ENCODE measurements at regions of chr7 and their contacts with region 1.

Region 1: DNA sequence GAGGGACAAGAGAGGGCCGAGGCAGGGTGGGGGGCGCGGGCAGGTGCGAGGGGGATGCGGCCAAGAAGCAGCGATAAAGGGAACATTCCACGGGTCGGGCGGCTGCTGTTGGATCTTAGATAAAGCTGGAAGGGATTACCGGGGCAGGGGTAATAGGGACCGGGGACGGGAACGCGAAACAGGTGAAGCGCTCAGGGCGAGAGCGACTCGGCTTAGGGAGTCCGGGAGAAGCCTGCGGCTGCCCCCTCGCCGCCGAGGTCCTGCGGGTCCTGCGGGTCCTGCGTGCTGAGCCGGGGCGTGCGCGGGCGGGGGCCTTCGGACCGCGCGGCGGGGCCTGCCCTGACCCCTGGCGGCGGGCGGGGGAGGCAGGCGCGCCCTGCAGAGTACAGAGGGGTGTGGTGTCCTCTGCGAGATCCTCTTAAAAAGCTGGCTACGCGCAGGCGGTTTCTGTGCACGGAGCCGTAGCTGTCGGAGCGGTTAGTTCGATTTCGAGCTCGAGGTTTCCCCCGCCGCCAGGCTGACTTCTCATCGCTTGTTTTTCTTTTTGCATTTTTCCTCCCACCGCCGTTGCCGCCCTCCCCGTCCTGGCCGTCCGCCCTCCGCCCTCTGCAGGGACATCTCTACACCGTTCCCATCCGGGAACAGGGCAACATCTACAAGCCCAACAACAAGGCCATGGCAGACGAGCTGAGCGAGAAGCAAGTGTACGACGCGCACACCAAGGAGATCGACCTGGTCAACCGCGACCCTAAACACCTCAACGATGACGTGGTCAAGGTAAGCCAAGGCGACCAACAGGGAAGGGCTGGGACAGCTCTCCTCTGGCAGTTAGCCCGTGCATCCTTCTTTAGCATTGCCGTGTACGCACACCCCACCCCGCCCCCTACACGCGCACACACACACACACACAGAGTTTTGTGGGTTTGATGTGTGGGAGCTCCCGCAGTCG is 1.4 kb downstream of the CAV1 start:
- DNase-seq: peak; percentile 84
- H3K4me3 ChIP-seq: peak overlapping the region; percentile 74 to 98 (median 90)
- H3K27ac ChIP-seq: peak overlapping the region; percentile 97
- H3K4me1 ChIP-seq: peaks cover 72% of the 10 kb centered on the region
- H3K27me3 ChIP-seq: no peaks in the 10 kb centered on the region
- CTCF ChIP-seq: peak; percentile 72 to 88
- POLR2A ChIP-seq: peak; percentile 81

Region 2: GRCh38 chr7:116180302-116180701 is 345.9 kb before region 1 on chr7:
- CTCF ChIA-PET with region 1: interaction called, 9 read pairs
- POLR2A ChIA-PET with region 1: no interaction called
- dilution Hi-C with region 1: no loop called
- intact Hi-C with region 1: loop called (anchors 1 kb)
- DNase-seq: peak; percentile 70
- H3K4me3 ChIP-seq: no peak overlapping the region
- H3K27ac ChIP-seq: no peak overlapping the region
- H3K4me1 ChIP-seq: no peaks in the 10 kb centered on the region
- H3K27me3 ChIP-seq: no peaks in the 10 kb centered on the region
- CTCF ChIP-seq: peak; percentile 53 to 63
- POLR2A ChIP-seq: no peak

Region 3: GRCh38 chr7:116271963-116272839 is 254.0 kb before region 1 on chr7:
- CTCF ChIA-PET with region 1: interaction called, 14 read pairs
- POLR2A ChIA-PET with region 1: no interaction called
- dilution Hi-C with region 1: loop called (anchors 25 kb)
- intact Hi-C with region 1: no loop called
- DNase-seq: peak; percentile 94
- H3K4me3 ChIP-seq: peak overlapping the region in 1 of 3 experiments; percentile 48
- H3K27ac ChIP-seq: peak overlapping the region; percentile 90
- H3K4me1 ChIP-seq: peaks cover 57% of the 10 kb centered on the region
- H3K27me3 ChIP-seq: no peaks in the 10 kb centered on the region
- CTCF ChIP-seq: no peak
- POLR2A ChIP-seq: no peak

Region 4: DNA sequence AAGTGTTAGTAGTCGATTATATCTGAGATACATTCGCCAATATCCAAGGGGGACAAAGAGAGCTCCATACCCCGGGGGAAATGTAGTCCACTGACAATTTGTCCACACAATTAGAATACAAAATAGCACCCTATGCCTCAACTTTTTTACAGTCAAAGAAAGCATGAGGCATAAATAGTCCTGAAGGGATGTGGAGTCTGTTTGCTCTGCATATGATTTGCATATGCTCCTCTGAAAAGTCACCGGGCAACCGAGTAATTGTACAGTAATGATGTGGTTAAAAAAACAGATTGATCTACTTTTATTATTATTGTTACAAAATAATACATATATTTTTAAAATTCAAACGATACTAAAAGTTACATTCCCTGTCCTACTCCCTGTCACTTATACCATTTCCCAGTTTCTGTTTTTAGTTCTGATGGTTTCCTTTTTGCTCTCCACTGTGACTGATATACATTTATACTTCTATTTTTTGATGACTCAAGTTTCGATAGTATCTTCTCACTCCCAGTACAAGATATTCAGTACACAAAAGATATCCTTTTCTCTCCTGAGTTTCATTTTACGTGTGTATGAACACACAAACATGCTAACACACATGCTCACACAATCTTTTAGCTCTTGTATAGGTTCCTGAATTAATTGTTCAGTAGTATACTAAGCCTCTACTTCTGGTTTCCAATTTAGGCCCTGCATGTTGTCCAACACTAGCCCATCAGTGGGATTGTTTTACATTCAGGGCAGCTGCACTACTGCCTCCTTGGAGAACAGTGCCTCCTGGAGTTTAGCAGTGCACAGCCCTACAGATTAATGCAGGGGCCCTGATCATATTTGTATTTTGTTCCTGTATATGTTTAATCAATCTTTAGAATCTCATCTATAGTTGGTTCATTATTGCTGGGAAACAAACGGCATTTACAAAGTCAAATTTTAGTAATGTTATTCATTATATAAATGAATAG is 185.0 kb before region 1 on chr7:
- CTCF ChIA-PET with region 1: interaction called, 19 read pairs
- POLR2A ChIA-PET with region 1: no interaction called
- dilution Hi-C with region 1: loop called (anchors 25 kb)
- intact Hi-C with region 1: loop called (anchors 1 kb)
- DNase-seq: peak; percentile 72
- H3K4me3 ChIP-seq: peak overlapping the region in 1 of 3 experiments; percentile 31
- H3K27ac ChIP-seq: peak overlapping the region; percentile 87
- H3K4me1 ChIP-seq: peaks cover 49% of the 10 kb centered on the region
- H3K27me3 ChIP-seq: no peaks in the 10 kb centered on the region
- CTCF ChIP-seq: peak; percentile 45 to 48
- POLR2A ChIP-seq: no peak

Region 5: DNA sequence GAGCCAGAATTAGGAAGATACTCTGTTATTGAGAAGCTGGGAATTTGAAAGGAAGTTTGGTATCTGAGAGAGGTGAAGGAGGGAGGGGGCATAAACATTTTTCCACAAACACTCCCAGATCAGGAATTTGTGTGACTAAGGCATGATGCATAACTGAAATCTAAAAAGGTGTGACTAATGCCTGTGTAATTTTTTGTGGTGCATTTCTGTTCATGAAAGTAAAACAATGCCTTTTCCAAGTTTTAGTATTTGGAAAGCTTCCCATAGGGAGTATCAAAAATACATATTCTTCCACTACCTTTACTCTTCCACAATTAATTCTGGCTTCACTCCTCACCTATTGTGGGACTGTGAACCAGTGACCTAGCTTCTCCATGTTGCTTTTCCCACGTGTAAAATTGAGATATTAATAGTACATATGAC is 83.1 kb before region 1 on chr7:
- CTCF ChIA-PET with region 1: interaction called, 14 read pairs
- POLR2A ChIA-PET with region 1: no interaction called
- dilution Hi-C with region 1: no loop called
- intact Hi-C with region 1: loop called (anchors 1 kb)
- DNase-seq: peak; percentile 91
- H3K4me3 ChIP-seq: no peak overlapping the region
- H3K27ac ChIP-seq: peak overlapping the region; percentile 93
- H3K4me1 ChIP-seq: peaks cover 35% of the 10 kb centered on the region
- H3K27me3 ChIP-seq: no peaks in the 10 kb centered on the region
- CTCF ChIP-seq: no peak
- POLR2A ChIP-seq: peak; percentile 50

Region 6: DNA sequence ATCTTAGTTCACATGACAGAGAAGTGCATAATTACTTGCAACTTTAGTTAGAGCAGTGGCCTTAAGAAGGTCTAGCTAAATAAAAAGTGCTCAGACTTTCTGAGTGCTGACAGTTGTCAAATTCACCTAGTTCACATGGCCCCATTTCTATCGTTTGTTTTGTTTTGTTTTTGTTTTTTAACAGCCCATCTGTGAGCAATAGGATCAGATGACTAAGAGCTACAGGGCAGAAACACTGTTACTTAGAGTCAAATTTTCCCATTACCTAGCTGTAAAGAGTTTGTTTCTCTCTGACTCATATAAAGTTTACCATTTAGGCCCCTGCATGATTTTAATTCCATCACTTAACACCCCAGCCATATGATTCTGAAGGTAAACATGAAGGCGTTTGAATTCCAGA is 17.5 kb after region 1 on chr7:
- CTCF ChIA-PET with region 1: interaction called, 3 read pairs
- POLR2A ChIA-PET with region 1: no interaction called
- dilution Hi-C with region 1: no loop called
- intact Hi-C with region 1: loop called (anchors 2 kb)
- DNase-seq: peak; percentile 69
- H3K4me3 ChIP-seq: no peak overlapping the region
- H3K27ac ChIP-seq: peak overlapping the region; percentile 26
- H3K4me1 ChIP-seq: peaks cover 18% of the 10 kb centered on the region
- H3K27me3 ChIP-seq: no peaks in the 10 kb centered on the region
- CTCF ChIP-seq: no peak
- POLR2A ChIP-seq: no peak

Region 7: DNA sequence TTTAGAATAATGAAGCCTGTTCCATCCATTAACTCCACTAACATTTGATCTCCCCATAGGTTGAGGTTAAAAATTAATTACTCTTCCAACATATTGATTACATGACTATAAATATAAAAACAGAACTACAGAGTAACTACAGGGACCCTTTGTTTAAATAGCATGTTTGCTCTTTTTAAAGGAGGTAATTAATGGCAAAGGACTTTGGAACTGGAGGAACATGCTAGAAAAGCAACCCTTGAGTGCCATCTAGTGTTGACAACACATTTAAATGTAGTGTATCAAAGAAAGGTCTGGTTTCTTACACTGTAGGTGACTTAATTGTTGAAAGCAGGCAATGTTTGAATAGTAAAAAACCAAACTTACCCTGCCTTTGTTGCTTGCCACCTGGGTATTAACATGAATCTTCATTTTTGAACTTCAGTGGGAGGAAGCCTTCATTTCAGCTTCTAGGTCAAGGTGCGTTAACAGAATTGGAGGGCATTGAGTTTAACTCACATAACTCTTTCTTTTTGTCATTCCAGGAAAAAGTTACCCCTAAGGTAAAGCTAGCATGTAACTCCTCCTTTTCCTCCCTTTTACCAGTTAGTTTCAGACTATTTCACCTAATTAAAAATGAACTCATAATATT is 283.6 kb after region 1 on chr7:
- CTCF ChIA-PET with region 1: no interaction called
- POLR2A ChIA-PET with region 1: no interaction called
- dilution Hi-C with region 1: no loop called
- intact Hi-C with region 1: loop called (anchors 2 kb)
- DNase-seq: peak; percentile 86
- H3K4me3 ChIP-seq: no peak overlapping the region
- H3K27ac ChIP-seq: no peak overlapping the region
- H3K4me1 ChIP-seq: peaks cover 19% of the 10 kb centered on the region
- H3K27me3 ChIP-seq: no peaks in the 10 kb centered on the region
- CTCF ChIP-seq: peak; percentile 25 to 43
- POLR2A ChIP-seq: no peak